ENCODE measurements at regions of chr6 and their contacts with region 1.

Region 1: GRCh38 chr6:135195522-135195921 is 14.4 kb downstream of the MYB start:
- DNase-seq: no peak
- H3K4me3 Mint-ChIP-seq: peak overlapping the region; percentile 45
- H3K27ac Mint-ChIP-seq: peak overlapping the region; percentile 25
- H3K4me1 Mint-ChIP-seq: peaks cover 58% of the 10 kb centered on the region
- H3K27me3 Mint-ChIP-seq: no peaks in the 10 kb centered on the region

Region 2: DNA sequence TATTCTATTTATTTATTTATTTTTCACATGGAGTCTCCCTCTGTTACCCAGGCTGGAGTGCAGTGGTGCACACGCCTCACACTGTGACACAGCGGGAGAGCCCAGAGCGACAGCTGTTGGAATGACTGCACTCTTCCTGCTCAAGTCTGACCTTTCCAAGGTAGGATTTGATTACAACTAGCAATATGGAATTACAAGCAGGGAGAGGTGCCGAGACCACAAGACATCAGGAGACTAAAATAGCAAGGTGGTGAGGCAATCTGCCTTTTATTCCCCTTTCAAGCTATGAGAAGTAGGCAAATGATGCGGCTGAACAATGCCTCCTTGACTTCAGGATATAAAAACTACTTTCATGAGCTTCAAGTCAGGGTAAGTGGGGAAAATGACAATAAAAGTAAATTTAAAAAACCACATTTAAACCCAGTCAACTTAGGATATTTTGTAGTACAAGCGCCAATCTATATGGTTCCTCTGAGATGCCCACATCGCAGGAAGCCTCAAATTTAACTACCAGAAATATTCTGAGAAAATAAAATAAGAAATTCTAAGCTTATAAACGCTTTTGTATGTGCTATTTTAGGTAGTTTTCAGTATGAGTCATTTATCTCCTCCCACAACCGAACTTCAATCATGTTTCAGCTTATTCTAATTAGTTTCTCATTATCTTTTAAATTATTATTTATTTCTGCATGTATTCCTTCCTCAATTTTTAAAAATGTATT is 730.7 kb before region 1 on chr6:
- intact Hi-C with region 1: no loop called
- DNase-seq: no peak
- H3K4me3 Mint-ChIP-seq: no peak overlapping the region
- H3K27ac Mint-ChIP-seq: no peak overlapping the region
- H3K4me1 Mint-ChIP-seq: no peaks in the 10 kb centered on the region
- H3K27me3 Mint-ChIP-seq: peaks cover 3% of the 10 kb centered on the region

Region 3: GRCh38 chr6:134994431-134994830 is 201.1 kb before region 1 on chr6:
- intact Hi-C with region 1: no loop called
- DNase-seq: no peak
- H3K4me3 Mint-ChIP-seq: no peak overlapping the region
- H3K27ac Mint-ChIP-seq: no peak overlapping the region
- H3K4me1 Mint-ChIP-seq: peaks cover 27% of the 10 kb centered on the region
- H3K27me3 Mint-ChIP-seq: no peaks in the 10 kb centered on the region

Region 4: DNA sequence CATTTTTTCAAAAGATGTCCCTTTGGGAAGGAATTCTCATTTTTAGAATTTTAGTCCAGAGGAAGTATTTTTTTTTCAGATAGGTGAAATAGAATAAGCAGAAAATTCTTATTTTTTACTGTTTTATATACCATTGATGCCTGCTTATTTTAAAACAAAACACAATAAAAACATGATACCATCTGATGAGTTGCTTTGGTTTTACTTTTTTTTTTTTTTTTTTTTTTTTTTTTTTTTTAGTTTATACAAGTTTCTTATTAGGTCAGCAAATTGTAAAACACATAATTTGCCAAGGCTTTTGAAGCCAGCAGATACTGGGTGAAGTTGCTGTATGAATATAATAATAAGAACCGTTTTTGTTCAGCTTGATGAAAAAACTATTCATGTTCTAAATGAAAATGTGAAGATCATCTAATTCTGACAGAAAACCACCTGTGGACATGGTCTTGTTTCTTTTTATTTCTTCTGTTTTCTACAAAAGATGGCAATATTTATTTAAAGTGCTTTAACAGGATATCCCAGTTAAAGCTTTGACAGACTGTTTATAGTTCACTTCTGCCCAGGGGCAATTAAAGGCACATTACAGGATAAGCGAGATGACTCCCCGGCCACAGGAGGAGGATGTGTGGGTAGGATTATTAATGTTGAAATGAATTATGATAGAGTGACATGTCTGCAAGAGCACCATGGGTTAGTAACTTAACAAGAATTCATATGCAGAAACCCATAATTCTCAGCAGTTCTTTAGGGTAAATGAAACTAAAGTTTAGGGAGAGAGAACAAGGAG is 16.7 kb after region 1 on chr6:
- intact Hi-C with region 1: loop called (anchors 2 kb)
- DNase-seq: no peak
- H3K4me3 Mint-ChIP-seq: peak overlapping the region; percentile 72
- H3K27ac Mint-ChIP-seq: peak overlapping the region; percentile 90
- H3K4me1 Mint-ChIP-seq: peaks cover 63% of the 10 kb centered on the region
- H3K27me3 Mint-ChIP-seq: no peaks in the 10 kb centered on the region

Region 5: DNA sequence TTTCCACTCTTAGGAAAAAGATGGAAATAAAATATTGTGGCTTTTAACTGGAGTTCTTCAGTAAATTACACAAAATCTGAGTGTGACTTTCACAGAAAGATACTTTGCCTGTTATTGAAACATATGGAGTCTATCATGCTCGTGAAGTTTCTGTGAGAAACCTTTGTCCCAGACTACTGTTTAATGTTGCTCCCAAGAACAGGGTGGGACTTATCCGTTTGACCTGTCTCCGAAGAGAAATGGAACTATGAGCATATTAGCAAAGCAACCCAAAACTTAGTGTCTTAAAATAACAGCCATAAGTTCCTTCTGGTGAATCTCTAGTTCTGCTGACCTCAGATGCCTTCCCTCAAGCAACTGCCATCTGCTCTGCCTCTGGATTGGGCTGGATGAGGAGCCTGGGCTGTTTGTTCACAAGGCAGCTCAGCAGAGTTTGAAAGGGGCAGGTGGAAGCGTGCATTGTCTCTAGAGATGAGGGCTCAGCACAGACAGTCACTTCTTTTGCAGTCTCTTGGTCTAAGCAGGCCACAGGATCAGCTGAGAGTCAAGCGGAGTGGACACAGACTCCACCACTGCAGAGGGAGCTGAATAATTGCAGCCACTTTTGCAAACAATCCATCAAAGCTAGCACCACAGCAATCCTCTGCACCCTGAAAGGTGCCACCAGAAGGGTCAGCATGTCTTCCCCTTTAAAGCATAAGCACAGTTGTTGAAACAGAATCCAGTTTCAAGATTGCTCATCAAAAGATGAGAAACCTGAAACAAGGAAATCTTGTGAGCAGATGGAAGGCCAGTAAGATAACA is 38.4 kb after region 1 on chr6:
- intact Hi-C with region 1: no loop called
- DNase-seq: no peak
- H3K4me3 Mint-ChIP-seq: no peak overlapping the region
- H3K27ac Mint-ChIP-seq: no peak overlapping the region
- H3K4me1 Mint-ChIP-seq: peaks cover 36% of the 10 kb centered on the region
- H3K27me3 Mint-ChIP-seq: peaks cover 2% of the 10 kb centered on the region

Region 6: GRCh38 chr6:135438907-135439535 is 243.5 kb after region 1 on chr6:
- intact Hi-C with region 1: loop called (anchors 5 kb)
- DNase-seq: no peak
- H3K4me3 Mint-ChIP-seq: peak overlapping the region; percentile 43
- H3K27ac Mint-ChIP-seq: peak overlapping the region; percentile 67
- H3K4me1 Mint-ChIP-seq: peaks cover 27% of the 10 kb centered on the region
- H3K27me3 Mint-ChIP-seq: no peaks in the 10 kb centered on the region

Measured in activated T-helper 1 cell treated with anti-CD3 and anti-CD28 coated beads, Interleukin-12 subunit alpha, Interleukin-12 subunit beta, Interleukin-2, Interleukin-4 antibody, amounts not matched to agents 30 ng/mL and 10 ng/mL and 1 ng/mL, durations not matched to agents 14 hours and 24 hours and 36 hours (primary cell).